Heart right ventricle (tissue), 16 donors: ENCODE measurements at regions of chr2 and their contacts with region 1.

Region 1: GRCh38 chr2:206004004-206004693 is 81.8 kb downstream of the INO80D start:
- DNase-seq: no peak
- ATAC-seq: peak in 3 of 8 donors; percentile 21 to 51 (median 44)
- H3K4me3 ChIP-seq: no peak overlapping the region
- H3K27ac ChIP-seq: no peak overlapping the region
- H3K4me1 ChIP-seq: no peaks in the 10 kb centered on the region
- H3K27me3 ChIP-seq: no peaks in the 10 kb centered on the region
- CTCF ChIP-seq: peak in 5 of 9 donors; percentile 14 to 34 (median 23)

Region 2: DNA sequence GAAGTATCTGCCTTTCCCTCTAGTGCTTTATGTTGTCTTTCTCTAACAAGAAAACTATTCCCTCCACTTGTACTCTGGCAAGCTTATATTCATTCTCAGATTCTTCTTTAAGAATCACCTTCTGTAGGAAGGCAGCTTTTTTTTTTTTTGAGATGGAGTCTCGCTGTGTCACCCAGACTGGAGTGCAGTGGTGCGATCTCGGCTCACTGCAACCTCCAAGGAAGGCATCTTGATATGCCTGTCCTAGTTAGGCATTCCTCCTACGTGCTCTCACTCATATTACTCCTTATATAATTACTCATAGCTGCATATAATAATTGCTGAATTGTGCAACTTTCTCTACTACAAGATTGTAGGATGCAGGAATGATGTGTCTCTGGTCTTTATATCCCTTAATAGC is 139.3 kb after region 1 on chr2:
- intact Hi-C with region 1: loop called in 1 of 10 experiments (anchors 10 kb)
- DNase-seq: no peak
- ATAC-seq: no peak
- H3K4me3 ChIP-seq: no peak overlapping the region
- H3K27ac ChIP-seq: no peak overlapping the region
- H3K4me1 ChIP-seq: no peaks in the 10 kb centered on the region
- H3K27me3 ChIP-seq: no peaks in the 10 kb centered on the region
- CTCF ChIP-seq: no peak